Esophagus muscularis mucosa (tissue), 4 donors: ENCODE measurements at regions of chr10 and their contacts with region 1.

Region 1: DNA sequence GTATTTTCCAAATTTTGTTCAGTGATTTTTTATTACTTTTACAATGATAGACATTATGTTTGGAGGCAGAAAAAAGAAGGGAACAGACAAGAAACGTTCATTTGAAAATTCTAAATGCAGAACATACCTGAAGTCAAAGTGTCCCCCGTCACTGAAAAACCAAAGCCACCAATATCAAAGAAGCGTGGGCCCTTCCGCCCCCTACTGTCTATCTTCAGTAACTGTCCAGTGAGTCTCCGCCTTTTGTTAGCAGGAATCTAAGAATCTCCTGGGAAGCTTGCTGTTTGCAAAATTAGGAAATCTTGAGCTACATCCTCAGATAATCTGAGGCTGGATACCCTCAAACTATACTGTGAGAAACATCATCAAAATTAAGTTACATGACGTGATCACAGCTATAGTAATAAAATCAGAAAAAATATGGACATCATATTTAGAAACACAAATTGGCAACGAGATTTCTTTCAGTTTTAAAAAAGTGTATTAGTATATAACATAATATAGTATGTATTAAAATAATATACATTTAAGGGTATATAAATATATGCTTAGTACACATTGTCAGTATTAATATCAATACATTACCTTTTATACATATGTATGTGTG is 169.3 kb upstream of the AKR1E2 start:
- DNase-seq: no peak
- H3K4me3 ChIP-seq: no peak overlapping the region
- H3K27ac ChIP-seq: peak overlapping the region in 1 of 4 donors; percentile 5
- H3K4me1 ChIP-seq: peaks cover 11 to 23% (median 20%) of the 10 kb centered on the region in 4 donors
- H3K27me3 ChIP-seq: no peaks in the 10 kb centered on the region
- CTCF ChIP-seq: peak; percentile 90 to 96 (median 91)
- EP300 ChIP-seq: no peak
- POLR2A ChIP-seq: no peak

Region 2: GRCh38 chr10:3197348-3198003 is 1459.2 kb before region 1 on chr10:
- intact Hi-C with region 1: loop called (anchors 10 kb)
- DNase-seq: no peak
- H3K4me3 ChIP-seq: peak overlapping the region; percentile 10 to 44 (median 10)
- H3K27ac ChIP-seq: peak overlapping the region in 3 of 4 donors; percentile 29 to 43 (median 35)
- H3K4me1 ChIP-seq: peaks cover 10 to 29% (median 22%) of the 10 kb centered on the region in 4 donors
- H3K27me3 ChIP-seq: peaks cover 0 to 3% (median 0%) of the 10 kb centered on the region in 4 donors
- CTCF ChIP-seq: peak; percentile 91 to 98 (median 94)
- EP300 ChIP-seq: no peak
- POLR2A ChIP-seq: no peak

Region 3: DNA sequence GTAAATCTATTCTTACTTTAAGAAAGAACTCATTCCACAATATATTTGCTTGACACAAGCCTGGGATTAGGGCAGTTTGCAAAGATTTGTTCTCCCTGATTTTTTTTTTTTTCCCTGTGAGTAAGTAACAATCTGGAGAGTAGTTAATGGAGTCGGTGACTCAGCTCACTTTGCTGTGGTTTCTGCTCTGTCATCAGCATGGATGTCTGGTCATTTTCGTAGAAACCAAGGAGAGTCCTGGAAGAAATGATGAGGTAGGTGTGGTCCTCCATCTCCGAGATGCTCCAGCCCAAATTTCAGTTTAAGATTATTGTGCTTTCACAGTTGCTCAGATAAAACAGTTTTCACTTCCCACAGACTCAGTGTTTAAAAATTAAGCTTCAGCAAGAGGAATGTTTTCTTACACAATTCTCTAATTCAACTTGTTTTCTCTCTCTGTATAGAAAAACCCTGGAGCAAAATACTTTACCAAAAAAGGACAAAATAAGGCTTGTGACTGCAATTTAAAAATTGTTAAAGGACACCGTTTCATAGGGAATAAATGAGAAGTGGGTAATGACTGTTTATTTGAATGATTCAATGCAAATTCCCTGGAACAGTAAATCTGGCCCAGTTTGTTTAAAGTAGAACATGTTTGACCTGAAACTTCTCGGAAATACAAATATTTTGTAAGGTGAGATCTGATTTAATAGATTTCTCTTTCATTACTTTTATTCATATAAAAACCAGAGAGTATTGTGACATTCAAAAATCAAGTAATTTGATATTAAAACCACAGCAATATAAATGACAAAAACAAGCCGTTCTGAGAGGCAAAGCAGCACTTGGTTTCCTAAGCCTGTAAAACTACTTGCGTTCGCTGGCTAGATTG is 1407.6 kb before region 1 on chr10:
- intact Hi-C with region 1: loop called (anchors 10 kb)
- DNase-seq: no peak
- H3K4me3 ChIP-seq: peak overlapping the region in 1 of 4 donors; percentile 19
- H3K27ac ChIP-seq: peak overlapping the region; percentile 70 to 83 (median 77)
- H3K4me1 ChIP-seq: peaks cover 3 to 22% (median 18%) of the 10 kb centered on the region in 4 donors
- H3K27me3 ChIP-seq: no peaks in the 10 kb centered on the region
- CTCF ChIP-seq: no peak
- EP300 ChIP-seq: no peak
- POLR2A ChIP-seq: no peak

Region 4: GRCh38 chr10:4067531-4067930 is 589.1 kb before region 1 on chr10:
- intact Hi-C with region 1: loop called (anchors 10 kb)
- DNase-seq: no peak
- H3K4me3 ChIP-seq: no peak overlapping the region
- H3K27ac ChIP-seq: no peak overlapping the region
- H3K4me1 ChIP-seq: peaks cover 1 to 7% (median 4%) of the 10 kb centered on the region in 4 donors
- H3K27me3 ChIP-seq: no peaks in the 10 kb centered on the region
- CTCF ChIP-seq: no peak
- EP300 ChIP-seq: no peak
- POLR2A ChIP-seq: no peak

Region 5: DNA sequence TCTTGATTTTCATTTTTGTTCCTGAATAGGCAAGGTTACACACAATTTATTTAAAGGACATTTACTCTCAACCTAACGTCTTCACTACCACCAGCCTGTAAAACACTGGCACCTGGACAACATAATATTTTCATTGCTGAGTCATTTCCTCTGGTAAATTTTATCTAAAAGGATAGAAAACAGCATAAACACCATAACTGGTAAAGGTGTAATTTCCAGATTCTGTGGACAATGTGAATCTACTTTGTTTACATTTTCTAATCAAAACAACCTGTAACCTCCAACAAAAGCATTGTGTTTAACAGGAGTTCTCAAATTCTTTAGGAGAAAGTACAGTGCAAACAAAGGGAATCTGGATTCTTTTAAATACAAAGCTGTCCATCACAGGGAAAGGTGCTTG is 302.7 kb before region 1 on chr10:
- intact Hi-C with region 1: loop called (anchors 5 kb)
- DNase-seq: no peak
- H3K4me3 ChIP-seq: no peak overlapping the region
- H3K27ac ChIP-seq: peak overlapping the region; percentile 74 to 78 (median 76)
- H3K4me1 ChIP-seq: peaks cover 20 to 41% (median 35%) of the 10 kb centered on the region in 4 donors
- H3K27me3 ChIP-seq: no peaks in the 10 kb centered on the region
- CTCF ChIP-seq: no peak
- EP300 ChIP-seq: no peak
- POLR2A ChIP-seq: no peak

Region 6: DNA sequence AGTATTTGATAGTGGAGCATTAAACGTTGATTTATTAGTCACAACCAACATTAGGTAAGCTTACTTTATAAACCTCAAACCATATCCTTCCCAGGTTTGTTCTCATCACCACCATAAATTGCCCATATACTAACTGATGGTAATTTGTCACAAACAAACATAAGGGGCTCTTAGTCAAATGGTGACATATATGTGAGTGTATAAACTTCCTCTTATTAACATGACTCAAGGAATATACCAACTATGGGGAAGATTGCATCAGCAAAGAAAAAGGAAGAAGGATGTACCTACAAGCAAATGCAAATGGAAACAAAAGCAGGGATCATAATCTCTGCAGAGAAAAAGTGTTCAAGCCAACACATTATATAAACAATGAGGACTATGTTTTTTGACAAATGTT is 248.9 kb before region 1 on chr10:
- intact Hi-C with region 1: no loop called
- DNase-seq: no peak
- H3K4me3 ChIP-seq: no peak overlapping the region
- H3K27ac ChIP-seq: no peak overlapping the region
- H3K4me1 ChIP-seq: peaks cover 0 to 17% (median 8%) of the 10 kb centered on the region in 4 donors
- H3K27me3 ChIP-seq: no peaks in the 10 kb centered on the region
- CTCF ChIP-seq: no peak
- EP300 ChIP-seq: no peak
- POLR2A ChIP-seq: no peak

Region 7: GRCh38 chr10:4427532-4427931 is 229.1 kb before region 1 on chr10:
- intact Hi-C with region 1: no loop called
- DNase-seq: no peak
- H3K4me3 ChIP-seq: no peak overlapping the region
- H3K27ac ChIP-seq: peak overlapping the region in 3 of 4 donors; percentile 28 to 37 (median 30)
- H3K4me1 ChIP-seq: peaks cover 0 to 15% (median 9%) of the 10 kb centered on the region in 4 donors
- H3K27me3 ChIP-seq: no peaks in the 10 kb centered on the region
- CTCF ChIP-seq: no peak
- EP300 ChIP-seq: no peak
- POLR2A ChIP-seq: no peak

Region 8: GRCh38 chr10:4512671-4513240 is 143.9 kb before region 1 on chr10:
- intact Hi-C with region 1: loop called (anchors 5 kb)
- DNase-seq: no peak
- H3K4me3 ChIP-seq: no peak overlapping the region
- H3K27ac ChIP-seq: peak overlapping the region; percentile 21 to 65 (median 58)
- H3K4me1 ChIP-seq: peaks cover 20 to 36% (median 30%) of the 10 kb centered on the region in 4 donors
- H3K27me3 ChIP-seq: no peaks in the 10 kb centered on the region
- CTCF ChIP-seq: peak; percentile 58 to 71 (median 70)
- EP300 ChIP-seq: no peak
- POLR2A ChIP-seq: no peak

Region 9: DNA sequence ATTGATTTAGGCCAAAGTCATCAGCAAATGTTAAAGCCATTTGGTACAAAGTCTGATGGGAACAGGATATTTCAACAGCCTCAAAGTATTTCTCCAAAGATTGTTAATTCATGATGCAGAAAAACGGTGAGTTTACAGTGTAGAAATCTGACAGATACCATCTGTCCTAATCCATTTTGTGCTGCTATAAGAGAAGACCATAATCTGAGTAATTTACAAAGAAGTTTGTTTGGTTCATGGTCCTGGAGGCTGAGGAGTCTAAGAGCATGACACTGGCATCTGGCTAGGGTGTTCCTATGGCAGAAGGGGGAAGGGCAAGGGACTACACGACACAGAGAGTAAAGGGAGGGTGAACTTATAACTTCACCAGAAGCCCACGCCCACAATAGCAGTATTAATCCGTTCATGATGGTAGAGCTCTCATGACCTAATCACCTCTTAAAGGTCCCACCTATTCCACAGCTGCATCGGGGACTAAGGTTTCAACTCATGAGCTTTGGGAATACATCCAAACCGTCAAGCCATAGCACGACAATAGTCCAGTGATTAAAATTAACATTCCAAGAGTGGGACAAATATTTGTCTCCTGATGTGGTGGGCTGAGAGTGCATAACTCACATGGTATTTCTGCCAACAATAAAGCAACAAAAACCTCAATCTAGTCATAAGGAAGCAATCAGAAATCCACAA is 129.3 kb before region 1 on chr10:
- intact Hi-C with region 1: no loop called
- DNase-seq: no peak
- H3K4me3 ChIP-seq: no peak overlapping the region
- H3K27ac ChIP-seq: peak overlapping the region; percentile 22 to 56 (median 48)
- H3K4me1 ChIP-seq: peaks cover 4 to 26% (median 24%) of the 10 kb centered on the region in 4 donors
- H3K27me3 ChIP-seq: no peaks in the 10 kb centered on the region
- CTCF ChIP-seq: no peak
- EP300 ChIP-seq: no peak
- POLR2A ChIP-seq: no peak